ENCODE measurements at regions of chrX and their contacts with region 1.

Region 1: GRCh38 chrX:30570505-30570904 is 7.1 kb downstream of the TASL start:
- DNase-seq: no peak
- H3K4me3 ChIP-seq: no peak overlapping the region
- H3K27ac ChIP-seq: no peak overlapping the region
- H3K4me1 ChIP-seq: peaks cover 5% of the 10 kb centered on the region
- H3K27me3 ChIP-seq: peaks cover 3% of the 10 kb centered on the region
- CTCF ChIP-seq: peak; percentile 51 to 55

Region 2: GRCh38 chrX:30607155-30607554 is 36.6 kb after region 1 on chrX:
- CTCF ChIA-PET with region 1: interaction called, 10 read pairs
- dilution Hi-C with region 1: no loop called
- in situ Hi-C with region 1: no loop called
- intact Hi-C with region 1: no loop called
- DNase-seq: peak; percentile 78
- H3K4me3 ChIP-seq: peak overlapping the region in 1 of 3 experiments; percentile 22
- H3K27ac ChIP-seq: peak overlapping the region; percentile 35
- H3K4me1 ChIP-seq: no peaks in the 10 kb centered on the region
- H3K27me3 ChIP-seq: no peaks in the 10 kb centered on the region
- CTCF ChIP-seq: no peak

Region 3: DNA sequence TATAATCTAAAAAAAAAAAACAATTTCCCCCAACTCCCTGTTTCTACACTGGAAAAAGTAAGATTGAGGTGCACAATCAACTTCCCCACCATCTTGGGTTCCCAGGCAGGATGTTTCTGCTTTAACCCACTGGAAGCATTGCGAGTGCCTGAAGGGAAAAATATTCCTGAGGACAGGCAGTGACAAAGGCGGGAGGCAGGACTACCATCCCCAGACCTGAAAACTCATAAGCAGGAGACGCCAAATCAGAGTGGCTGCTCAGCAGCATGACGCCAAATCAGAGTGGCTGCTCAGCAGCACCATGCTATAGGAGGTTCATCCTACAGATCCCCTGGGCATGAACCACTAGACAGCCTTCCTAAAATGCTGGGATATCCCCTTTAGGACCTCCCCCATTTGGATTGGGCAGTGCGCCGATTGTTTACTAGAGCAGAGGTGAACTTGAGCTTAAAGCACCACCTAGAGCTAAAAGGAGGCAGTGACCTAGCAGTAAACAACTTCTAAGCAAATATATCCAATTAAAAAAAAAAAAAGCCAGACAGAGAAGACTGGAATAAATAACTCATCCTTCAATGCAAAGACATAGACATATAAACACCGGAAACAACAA is 47.8 kb after region 1 on chrX:
- CTCF ChIA-PET with region 1: interaction called, 3 read pairs
- dilution Hi-C with region 1: no loop called
- in situ Hi-C with region 1: no loop called
- intact Hi-C with region 1: loop called (anchors 5 kb)
- DNase-seq: no peak
- H3K4me3 ChIP-seq: no peak overlapping the region
- H3K27ac ChIP-seq: no peak overlapping the region
- H3K4me1 ChIP-seq: peaks cover 7% of the 10 kb centered on the region
- H3K27me3 ChIP-seq: no peaks in the 10 kb centered on the region
- CTCF ChIP-seq: peak in 1 of 2 donors; percentile 27

Region 4: GRCh38 chrX:30713061-30713525 is 142.6 kb after region 1 on chrX:
- CTCF ChIA-PET with region 1: interaction called, 3 read pairs
- dilution Hi-C with region 1: no loop called
- in situ Hi-C with region 1: loop called in 1 of 2 experiments (anchors 10 kb)
- intact Hi-C with region 1: loop called (anchors 1 kb)
- DNase-seq: peak; percentile 32
- H3K4me3 ChIP-seq: no peak overlapping the region
- H3K27ac ChIP-seq: no peak overlapping the region
- H3K4me1 ChIP-seq: no peaks in the 10 kb centered on the region
- H3K27me3 ChIP-seq: peaks cover 6% of the 10 kb centered on the region
- CTCF ChIP-seq: peak; percentile 81 to 87

Region 5: DNA sequence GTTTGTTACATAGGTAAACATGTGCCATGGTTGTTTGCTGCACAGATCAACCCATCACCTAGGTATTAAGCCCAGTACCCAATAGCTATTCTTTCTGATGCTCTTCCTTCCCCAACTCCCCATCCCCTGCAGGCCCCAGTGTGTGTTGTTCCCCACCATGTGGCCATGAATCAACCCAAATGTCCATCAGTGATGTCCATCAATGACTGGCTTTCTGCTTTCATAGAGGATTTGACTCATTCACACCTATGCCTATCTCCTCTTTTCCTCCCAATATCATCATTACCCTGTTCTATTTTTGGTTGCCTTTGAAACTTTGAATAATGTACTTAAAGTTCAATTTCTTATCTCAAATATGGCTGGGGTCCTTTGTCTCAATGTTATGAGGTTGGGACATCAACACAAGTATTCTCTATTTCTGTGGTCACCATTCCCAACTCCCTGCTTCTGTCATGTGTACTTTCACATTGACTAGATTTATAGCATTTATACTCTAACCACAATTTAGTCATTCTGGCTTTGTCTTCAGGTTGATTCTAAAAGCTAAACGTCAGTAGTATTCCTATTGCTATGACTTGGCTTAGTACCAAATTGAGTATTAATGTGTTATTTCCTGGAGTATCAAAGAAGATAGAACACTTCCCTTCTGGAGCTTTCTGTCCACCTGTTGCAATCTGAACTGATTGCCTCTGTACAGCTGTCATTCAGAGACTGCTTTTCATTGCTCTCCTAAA is 211.4 kb after region 1 on chrX:
- CTCF ChIA-PET with region 1: no interaction called
- dilution Hi-C with region 1: no loop called
- in situ Hi-C with region 1: no loop called
- intact Hi-C with region 1: no loop called
- DNase-seq: peak; percentile 55
- H3K4me3 ChIP-seq: no peak overlapping the region
- H3K27ac ChIP-seq: no peak overlapping the region
- H3K4me1 ChIP-seq: peaks cover 11% of the 10 kb centered on the region
- H3K27me3 ChIP-seq: no peaks in the 10 kb centered on the region
- CTCF ChIP-seq: no peak

Region 6: GRCh38 chrX:31658360-31658759 is 1087.9 kb after region 1 on chrX:
- CTCF ChIA-PET with region 1: no interaction called
- dilution Hi-C with region 1: no loop called
- in situ Hi-C with region 1: no loop called
- intact Hi-C with region 1: loop called (anchors 10 kb)
- DNase-seq: no peak
- H3K4me3 ChIP-seq: no peak overlapping the region
- H3K27ac ChIP-seq: no peak overlapping the region
- H3K4me1 ChIP-seq: no peaks in the 10 kb centered on the region
- H3K27me3 ChIP-seq: peaks cover 9% of the 10 kb centered on the region
- CTCF ChIP-seq: peak; percentile 53 to 73

Measured in mammary epithelial cell (primary cell).